Common myeloid progenitor, CD34-positive (primary cell): ENCODE measurements at regions of chr17 and their contacts with region 1.

Region 1: DNA sequence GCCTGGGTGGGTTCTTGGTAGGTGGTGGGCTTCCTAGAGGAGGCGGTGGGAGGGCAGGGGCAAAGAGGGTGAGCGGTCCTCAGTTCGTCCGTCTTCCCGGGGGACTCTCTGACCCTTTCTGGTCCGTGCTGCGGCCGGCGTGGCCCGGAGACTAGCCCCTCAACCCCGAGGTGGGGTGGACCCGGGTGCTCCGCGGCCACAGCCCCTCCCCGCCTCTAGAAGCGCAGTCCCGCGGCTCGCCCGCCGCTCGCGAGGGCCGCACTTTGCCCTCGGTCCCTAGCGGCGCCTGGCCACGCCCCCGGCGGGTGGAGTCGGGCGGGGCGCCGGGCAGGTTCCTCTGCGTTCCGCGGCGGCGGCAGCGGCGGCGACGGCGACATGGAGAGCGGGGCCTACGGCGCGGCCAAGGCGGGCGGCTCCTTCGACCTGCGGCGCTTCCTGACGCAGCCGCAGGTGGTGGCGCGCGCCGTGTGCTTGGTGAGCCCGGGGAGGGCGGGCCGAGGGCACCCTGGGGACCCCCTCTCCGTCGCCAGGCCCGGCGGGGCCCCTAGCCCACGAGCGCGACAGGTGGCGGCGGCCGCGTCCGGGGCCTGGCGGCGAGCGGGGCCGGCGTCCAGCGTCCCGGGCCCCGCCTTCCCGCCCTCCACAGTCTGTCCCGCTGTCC is at the start of gene SYNGR2:
- DNase-seq: peak; percentile 71 to 88 (median 83)
- H3K4me3 ChIP-seq: peak within 1 kb of the TSS; percentile 36 to 79 (median 71)
- H3K27ac ChIP-seq: peak within 1 kb of the TSS in 1 of 2 experiments; percentile 66
- H3K4me1 ChIP-seq: peaks cover 0 to 40% (median 37%) of the 10 kb centered on the region in 4 experiments
- H3K27me3 ChIP-seq: no peaks in the 10 kb centered on the region

Region 2: GRCh38 chr17:77924757-77925336 is 243.5 kb before region 1 on chr17:
- CTCF ChIA-PET with region 1: no interaction called
- POLR2A ChIA-PET with region 1: no interaction called
- DNase-seq: peak; percentile 22 to 49 (median 33)
- H3K4me3 ChIP-seq: no peak overlapping the region
- H3K27ac ChIP-seq: no peak overlapping the region
- H3K4me1 ChIP-seq: no peaks in the 10 kb centered on the region
- H3K27me3 ChIP-seq: peaks cover 0 to 20% (median 13%) of the 10 kb centered on the region in 5 experiments

Region 3: DNA sequence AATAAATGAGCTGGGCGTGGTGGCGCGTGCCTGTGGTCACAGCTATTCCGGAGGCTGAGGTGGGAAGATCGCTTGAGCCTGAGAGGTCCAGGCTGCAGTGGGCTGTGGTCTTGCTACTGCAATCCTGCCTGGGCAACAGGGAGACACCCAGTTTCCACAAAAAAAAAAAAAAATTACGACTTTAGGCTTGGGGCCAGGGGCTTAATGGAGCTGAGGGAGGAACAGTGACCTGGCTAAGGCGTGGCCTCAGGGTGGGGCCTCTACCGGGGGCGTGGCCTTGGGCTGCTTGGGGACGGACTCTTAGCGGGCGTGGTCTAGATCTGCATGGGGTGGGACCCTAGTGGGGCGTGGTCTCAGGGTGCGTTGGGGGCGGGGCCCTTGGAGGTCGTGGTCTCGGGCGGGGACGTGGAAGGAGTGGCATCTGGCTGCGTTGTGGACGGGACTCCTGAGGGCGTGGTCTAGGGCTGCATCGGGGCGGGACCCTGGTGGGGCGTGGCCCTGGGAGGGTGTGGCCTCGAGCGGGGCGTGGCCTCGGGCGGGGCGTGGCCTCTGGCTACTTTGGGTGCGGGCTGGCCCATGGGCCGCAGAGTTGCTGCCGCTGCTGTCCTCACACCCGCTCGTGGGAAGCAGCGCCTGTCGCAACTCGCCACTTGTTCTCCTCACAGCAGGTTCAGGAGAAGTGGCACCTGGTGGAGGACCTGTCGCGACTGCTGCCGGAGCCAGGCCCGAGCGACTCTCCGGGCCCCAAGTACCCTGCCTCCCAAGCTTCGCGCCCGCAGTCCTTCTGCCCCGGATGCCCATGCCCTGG is 28.0 kb before region 1 on chr17:
- CTCF ChIA-PET with region 1: interaction called, 76 read pairs
- POLR2A ChIA-PET with region 1: interaction called, 6 read pairs
- DNase-seq: peak; percentile 95 to 98 (median 98)
- H3K4me3 ChIP-seq: peak overlapping the region in 2 of 7 experiments; percentile 26 to 37
- H3K27ac ChIP-seq: peak overlapping the region in 1 of 2 experiments; percentile 70
- H3K4me1 ChIP-seq: peaks cover 6 to 73% (median 67%) of the 10 kb centered on the region in 4 experiments
- H3K27me3 ChIP-seq: no peaks in the 10 kb centered on the region

Region 4: DNA sequence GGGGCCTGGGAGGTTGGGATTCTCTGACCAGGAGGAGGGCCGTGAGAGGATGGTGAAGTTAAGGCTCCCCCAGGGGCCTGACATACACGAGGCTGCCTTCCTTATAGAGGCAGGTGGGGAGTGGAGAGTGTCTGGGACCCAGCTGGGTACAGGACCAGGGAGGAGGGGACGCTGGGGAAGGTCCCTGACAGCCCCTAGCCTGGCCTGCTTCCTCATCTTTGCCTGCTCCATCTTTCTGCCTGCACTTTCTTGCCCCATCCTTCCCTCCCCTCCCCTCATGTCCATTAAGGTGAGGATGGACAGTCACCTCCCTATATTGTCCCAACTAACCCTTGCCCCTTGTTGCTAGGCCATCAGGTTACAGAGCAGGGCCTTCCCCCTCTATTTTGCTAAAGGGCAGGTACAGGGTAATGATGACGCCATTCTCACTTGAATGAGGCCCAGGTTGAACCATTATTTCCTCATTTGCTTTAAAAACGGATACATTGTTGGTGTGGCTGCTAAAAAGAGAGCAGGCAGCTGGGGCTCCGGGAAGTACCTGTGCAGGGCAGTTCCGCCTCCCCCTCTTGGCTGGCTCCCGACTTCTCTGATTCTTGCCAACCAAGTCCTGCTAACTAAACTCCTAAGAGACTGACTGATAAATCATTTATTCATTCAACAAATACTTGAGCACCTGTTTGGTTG is 20.9 kb before region 1 on chr17:
- CTCF ChIA-PET with region 1: interaction called, 12 read pairs
- POLR2A ChIA-PET with region 1: interaction called, 3 read pairs
- DNase-seq: peak in 2 of 3 donors; percentile 79 to 84
- H3K4me3 ChIP-seq: no peak overlapping the region
- H3K27ac ChIP-seq: no peak overlapping the region
- H3K4me1 ChIP-seq: peaks cover 2 to 44% (median 41%) of the 10 kb centered on the region in 4 experiments
- H3K27me3 ChIP-seq: no peaks in the 10 kb centered on the region

Region 5: GRCh38 chr17:78378225-78379130 is 210.1 kb after region 1 on chr17 and contains the start of gene PGS1:
- CTCF ChIA-PET with region 1: no interaction called
- POLR2A ChIA-PET with region 1: no interaction called
- DNase-seq: peak; percentile 70 to 88 (median 84)
- H3K4me3 ChIP-seq: peak within 1 kb of the TSS; percentile 85 to 100 (median 95)
- H3K27ac ChIP-seq: peak within 1 kb of the TSS; percentile 75 to 86
- H3K4me1 ChIP-seq: peaks cover 22 to 67% (median 55%) of the 10 kb centered on the region in 4 experiments
- H3K27me3 ChIP-seq: no peaks in the 10 kb centered on the region